CD4-positive, alpha-beta T cell (primary cell): ENCODE measurements at regions of chr1 and their contacts with region 1.

Region 1: DNA sequence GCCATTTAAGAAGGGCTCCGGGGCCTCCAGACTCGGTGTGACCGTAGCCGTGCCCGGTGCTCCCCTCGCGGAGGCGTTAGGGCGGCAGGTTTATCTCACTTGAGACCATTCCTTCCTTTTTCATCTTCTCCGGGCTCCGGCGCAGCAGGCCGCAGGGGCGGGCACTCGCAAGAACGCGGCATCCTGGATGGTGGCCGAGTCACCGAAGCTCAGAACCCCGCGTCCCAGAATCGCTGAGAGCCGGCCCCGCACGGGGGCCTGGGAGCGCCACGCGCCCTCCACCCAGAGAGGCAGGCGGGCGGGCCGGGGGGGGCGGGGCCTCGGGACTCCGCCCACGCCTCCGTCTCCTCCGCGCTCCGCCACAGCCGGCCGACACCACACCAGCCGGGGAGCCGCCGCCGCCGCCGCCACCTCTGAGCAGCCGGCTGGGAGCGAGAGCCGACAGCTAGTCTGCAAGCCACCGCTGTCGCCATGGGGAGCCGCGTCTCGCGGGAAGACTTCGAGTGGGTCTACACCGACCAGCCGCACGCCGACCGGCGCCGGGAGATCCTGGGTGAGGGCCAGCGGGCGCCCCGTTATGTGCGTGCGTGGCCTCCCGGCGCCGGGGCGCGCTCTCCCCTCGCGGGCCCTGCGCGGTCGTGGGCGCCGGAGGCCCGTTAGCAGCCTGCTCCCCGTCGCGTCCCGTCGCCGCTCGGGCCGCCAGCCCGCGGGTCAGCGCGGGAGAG is at the start of gene DEGS1:
- DNase-seq: peak; percentile 75 to 94 (median 80)
- ATAC-seq: peak; percentile 75
- H3K4me3 ChIP-seq: peak within 1 kb of the TSS; percentile 92
- H3K4me3 Mint-ChIP-seq: peak within 1 kb of the TSS; percentile 96
- H3K27ac ChIP-seq: peak within 1 kb of the TSS; percentile 93 to 97
- H3K27ac Mint-ChIP-seq: peak within 1 kb of the TSS; percentile 94
- H3K4me1 ChIP-seq: peaks cover 52% of the 10 kb centered on the region
- H3K4me1 Mint-ChIP-seq: peaks cover 53% of the 10 kb centered on the region
- H3K27me3 ChIP-seq: no peaks in the 10 kb centered on the region
- H3K27me3 Mint-ChIP-seq: no peaks in the 10 kb centered on the region
- CTCF ChIP-seq: no peak
- total RNA-seq, gene DEGS1: 54.0 to 59.1 TPM

Region 2: DNA sequence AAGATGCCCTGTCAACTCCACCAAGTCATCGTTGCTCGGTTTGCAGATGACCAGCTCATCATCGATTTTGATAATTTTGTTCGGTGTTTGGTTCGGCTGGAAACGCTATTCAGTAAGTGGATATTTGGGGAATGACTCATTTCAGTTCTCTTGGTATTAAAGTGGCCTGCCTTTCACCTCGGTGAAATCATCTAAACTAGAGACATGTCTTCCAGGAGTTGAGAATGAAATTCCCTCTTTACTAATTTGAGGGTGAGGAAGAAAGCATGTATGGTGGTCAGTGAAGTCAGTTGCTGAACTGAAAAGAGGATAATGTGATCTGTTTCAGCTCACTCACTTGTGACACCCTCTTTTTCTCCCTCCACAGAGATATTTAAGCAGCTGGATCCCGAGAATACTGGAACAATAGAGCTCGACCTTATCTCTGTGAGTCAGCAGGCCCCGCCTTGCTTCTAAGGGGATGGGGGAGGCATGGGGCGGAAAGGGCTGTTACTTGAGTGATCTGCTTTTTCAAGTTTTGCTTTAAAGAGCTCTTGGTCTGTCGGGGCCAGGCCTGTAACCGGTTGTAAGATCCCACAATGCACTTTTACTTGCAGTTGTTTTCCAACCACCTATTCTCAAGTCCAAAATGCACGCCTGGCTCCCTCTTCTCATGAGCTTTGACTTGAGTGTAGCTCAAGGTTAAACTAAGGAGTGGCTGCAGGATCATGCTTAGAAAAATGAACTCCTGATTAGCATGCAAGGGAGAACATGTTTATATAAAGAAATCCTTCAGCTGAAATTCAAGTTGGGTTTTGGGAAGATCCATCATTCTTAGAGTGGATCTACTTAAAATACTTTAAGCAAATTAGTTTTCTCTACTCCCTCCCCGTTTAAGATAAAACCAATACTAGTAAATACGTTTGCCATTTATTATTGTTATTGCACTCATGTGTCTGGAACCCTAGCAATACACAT is 410.9 kb before region 1 on chr1:
- CTCF ChIA-PET with region 1: no interaction called
- POLR2A ChIA-PET with region 1: no interaction called
- intact Hi-C with region 1: no loop called
- DNase-seq: no peak
- ATAC-seq: no peak
- H3K4me3 ChIP-seq: no peak overlapping the region
- H3K4me3 Mint-ChIP-seq: no peak overlapping the region
- H3K27ac ChIP-seq: no peak overlapping the region
- H3K27ac Mint-ChIP-seq: peak overlapping the region; percentile 62
- H3K4me1 ChIP-seq: peaks cover 9% of the 10 kb centered on the region
- H3K4me1 Mint-ChIP-seq: peaks cover 11% of the 10 kb centered on the region
- H3K27me3 ChIP-seq: no peaks in the 10 kb centered on the region
- H3K27me3 Mint-ChIP-seq: no peaks in the 10 kb centered on the region
- CTCF ChIP-seq: no peak

Region 3: GRCh38 chr1:223831755-223832636 is 351.0 kb before region 1 on chr1:
- CTCF ChIA-PET with region 1: no interaction called
- POLR2A ChIA-PET with region 1: no interaction called
- intact Hi-C with region 1: loop called in 1 of 2 experiments (anchors 10 kb)
- DNase-seq: peak in 3 of 14 experiments; percentile 50 to 71 (median 65)
- ATAC-seq: peak; percentile 69
- H3K4me3 ChIP-seq: no peak overlapping the region
- H3K4me3 Mint-ChIP-seq: peak overlapping the region; percentile 39
- H3K27ac ChIP-seq: peak overlapping the region; percentile 64 to 69
- H3K27ac Mint-ChIP-seq: no peak overlapping the region
- H3K4me1 ChIP-seq: peaks cover 36% of the 10 kb centered on the region
- H3K4me1 Mint-ChIP-seq: peaks cover 18% of the 10 kb centered on the region
- H3K27me3 ChIP-seq: no peaks in the 10 kb centered on the region
- H3K27me3 Mint-ChIP-seq: no peaks in the 10 kb centered on the region
- CTCF ChIP-seq: peak; percentile 16

Region 4: DNA sequence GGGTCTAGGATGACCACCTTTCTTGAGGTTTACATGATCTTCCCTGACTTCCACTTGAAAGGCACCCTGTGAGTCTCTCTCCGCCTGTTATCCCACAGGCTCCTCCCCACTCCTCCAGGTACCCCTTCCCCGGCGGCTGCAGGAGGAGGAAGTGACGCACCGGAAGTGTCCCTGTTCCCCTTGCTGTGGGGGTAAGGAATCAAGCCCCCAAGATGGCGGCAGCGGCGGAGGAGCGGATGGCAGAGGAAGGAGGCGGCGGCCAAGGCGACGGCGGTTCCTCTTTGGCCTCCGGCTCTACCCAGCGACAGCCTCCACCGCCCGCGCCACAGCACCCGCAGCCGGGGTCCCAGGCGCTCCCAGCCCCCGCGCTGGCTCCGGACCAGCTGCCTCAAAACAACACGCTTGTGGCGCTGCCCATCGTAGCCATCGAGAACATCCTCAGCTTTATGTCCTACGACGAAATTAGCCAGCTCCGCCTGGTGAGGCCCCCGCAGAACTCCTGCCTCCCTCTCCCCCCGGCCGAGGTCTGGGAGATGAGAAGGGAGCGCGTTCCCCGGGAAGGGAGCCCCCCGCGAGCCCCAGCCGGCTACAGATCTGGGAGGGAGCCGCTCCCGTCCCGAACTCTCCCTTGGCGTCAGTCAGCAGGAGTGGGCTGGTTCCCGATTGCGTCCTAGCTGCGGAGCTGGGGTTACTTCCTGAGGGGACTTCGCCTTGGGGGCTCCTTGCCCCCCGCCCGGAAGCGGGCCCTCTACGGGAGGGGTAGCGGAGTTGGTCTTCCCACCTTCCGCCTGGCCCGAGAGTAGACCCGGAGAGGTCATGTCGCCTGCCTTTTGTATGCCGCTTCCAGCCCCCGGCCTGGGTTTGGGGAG is 68.9 kb before region 1 on chr1 and contains the start of gene FBXO28:
- CTCF ChIA-PET with region 1: no interaction called
- POLR2A ChIA-PET with region 1: interaction called, 12 read pairs
- intact Hi-C with region 1: loop called (anchors 2 kb)
- DNase-seq: peak; percentile 85 to 96 (median 92)
- ATAC-seq: peak; percentile 91
- H3K4me3 ChIP-seq: peak within 1 kb of the TSS; percentile 98
- H3K4me3 Mint-ChIP-seq: peak within 1 kb of the TSS; percentile 92
- H3K27ac ChIP-seq: peak within 1 kb of the TSS; percentile 91 to 98
- H3K27ac Mint-ChIP-seq: peak within 1 kb of the TSS; percentile 84
- H3K4me1 ChIP-seq: peaks cover 17% of the 10 kb centered on the region
- H3K4me1 Mint-ChIP-seq: peaks cover 42% of the 10 kb centered on the region
- H3K27me3 ChIP-seq: no peaks in the 10 kb centered on the region
- H3K27me3 Mint-ChIP-seq: peaks cover 6% of the 10 kb centered on the region
- CTCF ChIP-seq: no peak
- total RNA-seq, gene FBXO28: 32.5 to 37.1 TPM

Region 5: DNA sequence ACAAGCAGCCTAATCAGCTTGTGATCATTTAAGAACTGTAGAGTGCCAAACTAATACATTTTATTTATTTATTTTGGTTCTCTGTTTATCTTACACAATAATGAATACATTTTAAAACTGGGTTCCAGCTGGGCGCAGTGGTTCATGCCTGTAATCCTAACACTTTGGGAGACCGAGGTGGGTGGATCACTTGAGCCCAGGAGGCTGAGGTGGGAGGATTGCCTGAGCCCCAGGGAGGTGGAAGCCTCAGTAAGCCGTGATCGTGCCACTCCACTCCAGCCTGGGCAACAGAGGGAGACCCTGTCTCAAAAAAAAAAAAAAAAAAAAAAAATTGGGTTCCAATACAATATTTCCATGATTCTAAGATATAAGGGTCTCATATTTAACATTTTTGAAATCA is 59.9 kb before region 1 on chr1:
- CTCF ChIA-PET with region 1: no interaction called
- POLR2A ChIA-PET with region 1: interaction called, 3 read pairs
- intact Hi-C with region 1: loop called in 1 of 2 experiments (anchors 2 kb)
- DNase-seq: no peak
- ATAC-seq: no peak
- H3K4me3 ChIP-seq: no peak overlapping the region
- H3K4me3 Mint-ChIP-seq: no peak overlapping the region
- H3K27ac ChIP-seq: no peak overlapping the region
- H3K27ac Mint-ChIP-seq: no peak overlapping the region
- H3K4me1 ChIP-seq: peaks cover 5% of the 10 kb centered on the region
- H3K4me1 Mint-ChIP-seq: peaks cover 44% of the 10 kb centered on the region
- H3K27me3 ChIP-seq: no peaks in the 10 kb centered on the region
- H3K27me3 Mint-ChIP-seq: no peaks in the 10 kb centered on the region
- CTCF ChIP-seq: no peak

Region 6: DNA sequence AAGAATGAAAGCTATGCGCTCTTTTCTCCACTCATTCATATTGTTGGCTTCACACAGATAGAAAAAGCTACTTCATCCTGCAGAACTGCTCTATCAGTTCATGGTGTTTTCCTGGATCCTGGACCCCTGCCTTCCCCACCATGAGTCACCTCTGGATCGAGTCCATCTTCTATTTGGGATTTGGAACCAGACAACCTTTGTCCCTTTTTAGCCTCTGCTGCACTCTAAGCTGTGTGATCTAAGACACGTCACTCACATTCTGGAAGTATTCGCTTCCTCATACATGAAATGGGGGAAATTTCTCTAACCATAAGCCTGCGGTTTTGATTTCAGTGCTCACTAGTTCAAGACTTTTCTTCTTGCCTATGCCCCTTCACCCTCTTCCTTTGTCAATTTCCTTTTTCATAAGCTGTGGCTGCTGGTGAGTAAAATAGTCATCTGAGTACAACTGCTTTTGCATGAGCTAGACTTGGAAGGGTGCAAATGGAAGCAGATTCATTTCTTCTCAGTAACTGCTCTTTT is 14.1 kb before region 1 on chr1:
- CTCF ChIA-PET with region 1: interaction called, 6 read pairs
- POLR2A ChIA-PET with region 1: interaction called, 80 read pairs
- intact Hi-C with region 1: loop called in 1 of 2 experiments (anchors 1 kb)
- DNase-seq: peak in 5 of 14 experiments; percentile 17 to 86 (median 77)
- ATAC-seq: peak; percentile 91
- H3K4me3 ChIP-seq: no peak overlapping the region
- H3K4me3 Mint-ChIP-seq: peak overlapping the region; percentile 36
- H3K27ac ChIP-seq: no peak overlapping the region
- H3K27ac Mint-ChIP-seq: peak overlapping the region; percentile 21
- H3K4me1 ChIP-seq: peaks cover 28% of the 10 kb centered on the region
- H3K4me1 Mint-ChIP-seq: peaks cover 32% of the 10 kb centered on the region
- H3K27me3 ChIP-seq: no peaks in the 10 kb centered on the region
- H3K27me3 Mint-ChIP-seq: no peaks in the 10 kb centered on the region
- CTCF ChIP-seq: no peak

Region 7: GRCh38 chr1:224211206-224211962 is 28.4 kb after region 1 on chr1:
- CTCF ChIA-PET with region 1: no interaction called
- POLR2A ChIA-PET with region 1: no interaction called
- intact Hi-C with region 1: no loop called
- DNase-seq: peak in 1 of 14 experiments; percentile 13
- ATAC-seq: no peak
- H3K4me3 ChIP-seq: no peak overlapping the region
- H3K4me3 Mint-ChIP-seq: no peak overlapping the region
- H3K27ac ChIP-seq: no peak overlapping the region
- H3K27ac Mint-ChIP-seq: no peak overlapping the region
- H3K4me1 ChIP-seq: no peaks in the 10 kb centered on the region
- H3K4me1 Mint-ChIP-seq: no peaks in the 10 kb centered on the region
- H3K27me3 ChIP-seq: no peaks in the 10 kb centered on the region
- H3K27me3 Mint-ChIP-seq: no peaks in the 10 kb centered on the region
- CTCF ChIP-seq: no peak

Region 8: DNA sequence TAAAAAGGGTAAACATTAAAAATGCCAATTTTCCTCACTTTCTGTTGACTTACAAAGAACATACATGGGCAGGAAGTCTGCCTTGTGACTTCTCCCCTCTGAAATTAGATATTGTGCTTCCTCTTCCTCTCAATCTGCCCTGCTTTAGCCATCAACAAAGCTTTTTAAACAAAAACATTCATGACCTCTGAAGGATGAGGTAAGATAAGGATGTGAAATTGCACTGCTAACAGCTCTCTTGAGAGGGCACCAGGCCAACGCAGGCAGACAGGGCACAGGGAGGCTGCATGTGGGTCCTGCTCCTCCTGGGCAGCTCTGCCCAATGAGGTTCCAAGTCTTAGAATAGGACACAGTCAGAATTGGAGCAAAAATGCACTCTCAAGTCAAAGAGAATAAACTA is 62.2 kb after region 1 on chr1:
- CTCF ChIA-PET with region 1: no interaction called
- POLR2A ChIA-PET with region 1: interaction called, 16 read pairs
- intact Hi-C with region 1: loop called in 1 of 2 experiments (anchors 5 kb)
- DNase-seq: peak in 10 of 14 experiments; percentile 1 to 70 (median 10)
- ATAC-seq: peak; percentile 85
- H3K4me3 ChIP-seq: no peak overlapping the region
- H3K4me3 Mint-ChIP-seq: peak overlapping the region; percentile 70
- H3K27ac ChIP-seq: peak overlapping the region; percentile 30 to 76
- H3K27ac Mint-ChIP-seq: peak overlapping the region; percentile 93
- H3K4me1 ChIP-seq: peaks cover 14% of the 10 kb centered on the region
- H3K4me1 Mint-ChIP-seq: peaks cover 18% of the 10 kb centered on the region
- H3K27me3 ChIP-seq: no peaks in the 10 kb centered on the region
- H3K27me3 Mint-ChIP-seq: no peaks in the 10 kb centered on the region
- CTCF ChIP-seq: no peak